ENCODE measurements at regions of chr1 and their contacts with region 1.

Region 1: GRCh38 chr1:65558215-65558614 is 137.7 kb downstream of the LEPR start:
- DNase-seq: no peak
- ATAC-seq: no peak
- H3K4me3 ChIP-seq: no peak overlapping the region
- H3K27ac ChIP-seq: no peak overlapping the region
- H3K4me1 ChIP-seq: no peaks in the 10 kb centered on the region
- H3K27me3 ChIP-seq: no peaks in the 10 kb centered on the region
- CTCF ChIP-seq: no peak
- POLR2A ChIP-seq: no peak

Region 2: DNA sequence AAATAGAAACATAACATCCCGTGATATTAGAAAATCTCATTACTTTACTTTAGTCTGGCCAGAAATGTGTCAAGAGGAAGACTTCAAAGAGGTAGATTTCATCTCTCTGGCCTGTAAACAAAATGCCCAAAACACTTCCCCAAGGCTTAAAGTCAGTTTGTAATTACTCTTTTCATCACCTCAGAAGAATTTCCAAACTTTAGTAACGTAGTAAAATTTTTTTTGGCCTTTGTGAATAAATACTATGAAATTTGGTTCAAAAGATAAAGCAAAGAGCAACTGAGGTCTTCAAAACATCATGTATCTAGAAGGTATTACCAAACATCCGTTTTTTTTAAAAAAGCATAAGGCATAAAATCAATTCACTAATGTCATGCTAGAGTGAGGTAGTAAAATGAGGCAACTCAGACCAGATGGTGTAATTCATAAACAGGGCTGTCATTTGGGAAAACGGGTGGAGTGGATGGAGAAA is 86.3 kb before region 1 on chr1:
- intact Hi-C with region 1: no loop called
- DNase-seq: no peak
- ATAC-seq: peak in 3 of 4 donors; percentile 29 to 43 (median 31)
- H3K4me3 ChIP-seq: no peak overlapping the region
- H3K27ac ChIP-seq: peak overlapping the region in 1 of 12 donors; percentile 27
- H3K4me1 ChIP-seq: peaks cover 0 to 54% (median 12%) of the 10 kb centered on the region in 12 donors
- H3K27me3 ChIP-seq: no peaks in the 10 kb centered on the region
- CTCF ChIP-seq: no peak
- POLR2A ChIP-seq: no peak

Region 3: DNA sequence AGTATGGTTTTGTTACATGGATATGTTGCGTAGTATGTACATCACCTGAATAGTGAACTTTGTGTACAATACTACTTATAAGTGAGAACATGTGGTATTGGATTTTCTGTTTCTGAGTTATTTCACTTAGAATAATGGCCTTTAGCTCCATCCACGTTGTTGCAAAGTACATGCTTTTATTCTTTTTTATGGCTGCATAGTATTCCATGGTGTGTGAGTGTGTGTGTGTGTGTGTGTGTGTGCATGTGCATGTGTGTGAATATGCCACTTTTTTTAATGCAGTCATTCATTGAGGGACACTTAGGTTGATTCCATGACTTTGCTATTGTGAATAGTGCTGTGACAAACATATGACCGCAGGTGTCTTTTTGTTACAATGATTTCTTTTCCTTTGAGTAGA is 10.1 kb after region 1 on chr1:
- intact Hi-C with region 1: loop called in 1 of 10 experiments (anchors 2 kb)
- DNase-seq: no peak
- ATAC-seq: no peak
- H3K4me3 ChIP-seq: no peak overlapping the region
- H3K27ac ChIP-seq: no peak overlapping the region
- H3K4me1 ChIP-seq: no peaks in the 10 kb centered on the region
- H3K27me3 ChIP-seq: no peaks in the 10 kb centered on the region
- CTCF ChIP-seq: no peak
- POLR2A ChIP-seq: no peak